ENCODE measurements at regions of chr22 and their contacts with region 1.

Region 1: GRCh38 chr22:43044290-43044712 is 29.4 kb upstream of the PACSIN2 start:
- DNase-seq: no peak
- ATAC-seq: no peak

Region 2: GRCh38 chr22:43066844-43067385 is 22.6 kb after region 1 on chr22:
- intact Hi-C with region 1: loop called (anchors 2 kb)
- DNase-seq: no peak
- ATAC-seq: no peak

Measured in Right ventricle myocardium superior (tissue), 1 donor.